Breast epithelium (tissue), 4 donors: ENCODE measurements at regions of chr2 and their contacts with region 1.

Region 1: GRCh38 chr2:96251721-96252292 is 14.0 kb downstream of the TMEM127 start:
- DNase-seq: peak; percentile 74 to 87
- H3K4me3 ChIP-seq: no peak overlapping the region
- H3K27ac ChIP-seq: peak overlapping the region; percentile 52 to 53
- H3K4me1 ChIP-seq: no peaks in the 10 kb centered on the region
- H3K27me3 ChIP-seq: no peaks in the 10 kb centered on the region
- CTCF ChIP-seq: no peak
- POLR2A ChIP-seq: no peak

Region 2: GRCh38 chr2:96213379-96213778 is 38.4 kb before region 1 on chr2:
- intact Hi-C with region 1: loop called (anchors 2 kb)
- DNase-seq: no peak
- H3K4me3 ChIP-seq: no peak overlapping the region
- H3K27ac ChIP-seq: no peak overlapping the region
- H3K4me1 ChIP-seq: no peaks in the 10 kb centered on the region
- H3K27me3 ChIP-seq: no peaks in the 10 kb centered on the region
- CTCF ChIP-seq: no peak
- POLR2A ChIP-seq: no peak